ENCODE measurements at regions of chr6 and their contacts with region 1.

Region 1: DNA sequence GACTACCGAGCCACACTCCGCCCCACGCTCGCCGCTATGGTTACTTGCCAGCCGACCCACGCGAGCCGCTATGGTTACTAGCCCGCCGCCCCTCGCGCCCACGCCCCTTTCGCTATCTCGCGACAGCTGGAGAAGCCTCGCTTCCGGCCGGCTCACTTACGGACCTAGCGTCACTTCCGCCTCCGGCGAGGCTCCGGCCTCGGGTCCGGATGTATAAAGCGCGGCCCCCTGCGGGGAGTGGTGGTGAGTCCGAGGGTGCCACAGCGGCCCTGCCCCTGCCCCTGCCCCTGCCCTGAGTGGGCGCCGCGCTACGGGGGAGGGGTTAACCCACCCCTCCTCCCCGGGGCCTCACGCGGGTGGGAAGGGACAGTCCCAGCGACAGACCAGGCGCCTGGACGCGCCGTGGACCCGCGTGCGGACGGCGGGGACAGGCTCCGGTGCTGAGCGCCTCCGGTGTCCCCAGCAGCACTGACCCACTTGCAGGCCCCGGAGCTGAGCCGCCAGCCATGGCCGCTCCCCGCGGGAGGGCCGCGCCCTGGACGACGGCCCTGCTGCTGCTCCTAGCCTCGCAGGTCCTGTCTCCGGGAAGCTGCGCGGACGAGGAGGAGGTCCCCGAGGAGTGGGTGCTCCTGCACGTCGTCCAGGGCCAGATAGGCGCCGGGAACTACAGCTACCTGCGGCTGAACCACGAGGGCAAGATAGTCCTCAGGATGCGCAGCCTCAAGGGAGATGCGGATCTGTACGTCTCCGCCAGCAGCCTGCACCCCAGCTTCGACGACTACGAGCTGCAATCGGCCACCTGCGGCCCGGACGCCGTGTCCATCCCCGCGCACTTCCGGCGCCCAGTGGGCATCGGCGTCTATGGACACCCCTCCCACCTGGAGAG is at the starts of genes C6orf120 and WDR27:
- DNase-seq: peak; percentile 99
- H3K4me3 ChIP-seq: peak within 1 kb of the TSS; percentile 83 to 99 (median 96)
- H3K27ac ChIP-seq: peak within 1 kb of the TSS; percentile 96 to 99 (median 96)
- H3K4me1 ChIP-seq: peaks cover 30 to 63% (median 48%) of the 10 kb centered on the region in 4 donors
- H3K27me3 ChIP-seq: no peaks in the 10 kb centered on the region
- CTCF ChIP-seq: peak in 1 of 3 experiments; percentile 15
- EP300 ChIP-seq: no peak
- POLR2A ChIP-seq: peak; percentile 82
- total RNA-seq, gene C6orf120: 25.3 to 35.6 (median 31.2) TPM
- total RNA-seq, gene WDR27: 9.3 to 18.4 (median 14.4) TPM

Region 2: DNA sequence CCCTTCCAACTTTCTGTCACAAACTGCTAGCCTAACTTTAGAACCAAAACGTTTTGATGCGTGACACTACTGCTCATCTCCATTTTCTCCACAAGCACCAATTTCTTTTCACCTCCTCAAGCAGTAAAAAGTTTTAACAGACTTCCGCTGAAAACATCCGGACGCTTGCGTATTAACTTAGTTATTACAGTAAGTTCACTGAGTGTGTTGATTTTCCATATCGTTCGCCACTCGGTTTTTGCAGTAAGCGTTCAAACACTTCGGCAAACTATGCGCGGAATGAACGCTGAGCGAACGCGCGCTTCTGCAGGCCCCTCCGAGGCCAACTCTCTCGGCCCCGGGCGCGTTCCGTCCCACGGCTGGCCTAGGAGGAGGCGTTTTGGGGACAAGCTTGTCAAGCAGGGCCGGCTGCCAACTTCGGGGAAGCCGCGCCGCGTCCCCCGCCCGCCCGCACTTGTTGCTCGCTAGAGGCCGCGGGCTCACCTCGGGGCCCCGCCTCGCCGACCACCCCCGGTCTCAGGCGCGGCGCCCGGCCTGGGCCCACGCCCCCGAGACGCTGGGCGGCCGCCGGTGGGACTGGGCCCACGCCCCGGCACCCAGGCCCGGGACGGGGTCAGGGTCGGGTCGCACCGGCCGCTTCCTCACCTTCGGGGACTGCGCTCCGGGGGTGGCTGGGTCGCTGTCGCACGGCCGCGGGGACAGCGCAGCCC is 21.2 kb after region 1 on chr6:
- intact Hi-C with region 1: loop called (anchors 2 kb)
- DNase-seq: peak; percentile 93
- H3K4me3 ChIP-seq: peak overlapping the region; percentile 67 to 93 (median 86)
- H3K27ac ChIP-seq: peak overlapping the region; percentile 93 to 95 (median 94)
- H3K4me1 ChIP-seq: peaks cover 26 to 56% (median 40%) of the 10 kb centered on the region in 4 donors
- H3K27me3 ChIP-seq: no peaks in the 10 kb centered on the region
- CTCF ChIP-seq: no peak
- EP300 ChIP-seq: no peak
- POLR2A ChIP-seq: no peak

Region 3: DNA sequence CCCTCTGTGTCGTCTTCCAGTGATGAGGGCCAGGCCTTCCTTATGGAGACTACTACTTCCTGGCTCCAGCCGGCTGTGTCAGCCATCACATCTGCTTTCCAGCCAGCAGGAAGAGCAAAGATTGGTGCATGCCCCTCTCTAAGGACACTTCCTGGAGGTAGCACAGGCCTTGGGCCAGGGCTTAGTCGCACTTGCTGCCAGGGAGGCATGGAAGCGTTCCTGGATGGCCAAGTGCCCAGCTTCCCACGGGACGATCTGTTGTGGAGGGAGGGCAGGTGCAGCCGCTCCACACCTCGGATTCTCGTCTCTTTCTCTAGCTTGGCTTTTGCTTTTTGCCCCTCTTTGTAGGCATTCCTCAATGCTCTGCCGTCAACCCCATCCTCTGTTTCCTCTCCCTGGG is 61.1 kb after region 1 on chr6:
- intact Hi-C with region 1: no loop called
- DNase-seq: peak; percentile 64
- H3K4me3 ChIP-seq: no peak overlapping the region
- H3K27ac ChIP-seq: no peak overlapping the region
- H3K4me1 ChIP-seq: peaks cover 0 to 9% (median 4%) of the 10 kb centered on the region in 4 donors
- H3K27me3 ChIP-seq: no peaks in the 10 kb centered on the region
- CTCF ChIP-seq: no peak
- EP300 ChIP-seq: no peak
- POLR2A ChIP-seq: no peak